GM10248 (cell line): ENCODE measurements at regions of chr21 and their contacts with region 1.

Region 1: GRCh38 chr21:33558777-33559421 is 16.1 kb downstream of the SON start:
- DNase-seq: no peak
- CTCF ChIP-seq: no peak

Region 2: DNA sequence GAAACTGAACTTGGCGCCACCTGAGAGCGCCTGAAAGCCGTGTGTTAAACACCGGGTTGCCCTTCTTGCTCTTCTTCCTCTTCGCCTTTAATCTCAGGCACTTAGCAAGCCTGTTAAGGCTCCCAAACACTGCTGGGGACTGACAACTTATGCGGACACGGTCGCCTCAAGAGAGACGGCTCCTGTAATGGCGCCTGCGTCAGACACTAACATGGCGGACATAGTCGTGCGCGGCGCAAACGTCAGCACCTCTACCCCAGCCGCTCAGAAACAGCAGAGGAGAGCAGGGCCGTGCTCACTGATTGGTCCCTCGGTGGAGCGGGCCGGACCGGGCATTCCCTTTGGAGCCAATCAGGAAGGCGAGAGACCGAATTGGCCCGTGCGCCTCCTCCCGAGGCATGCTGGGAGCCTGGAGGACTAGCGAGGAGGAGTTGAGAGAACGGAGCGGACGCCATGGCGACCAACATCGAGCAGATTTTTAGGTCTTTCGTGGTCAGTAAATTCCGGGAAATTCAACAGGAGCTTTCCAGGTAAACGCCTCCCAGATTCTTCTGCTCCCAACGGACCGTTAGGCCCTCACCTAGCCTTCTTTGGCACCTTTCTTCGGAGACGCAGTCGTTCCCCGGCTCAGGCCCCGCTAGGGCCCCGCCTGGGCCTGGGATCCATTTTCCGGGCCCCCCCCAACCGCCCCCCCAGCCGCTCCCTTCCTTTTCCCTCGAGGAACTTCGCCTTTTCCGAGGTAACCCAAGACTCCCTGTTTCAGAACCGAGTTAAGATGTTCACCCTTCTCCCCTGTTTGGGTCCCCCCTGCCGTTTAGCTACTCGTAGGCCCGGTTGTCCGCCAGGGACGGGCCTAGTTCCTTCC is 16.0 kb before region 1 on chr21 and contains the start of gene SON:
- CTCF ChIA-PET with region 1: interaction called, 12 read pairs
- POLR2A ChIA-PET with region 1: interaction called, 4 read pairs
- DNase-seq: peak; percentile 97
- CTCF ChIP-seq: no peak